Activated CD4-positive, alpha-beta memory T cell treated with anti-CD3 and anti-CD28 coated beads for 36 hours (primary cell): ENCODE measurements at regions of chrX and their contacts with region 1.

Region 1: GRCh38 chrX:47193475-47194193 is at the start of gene UBA1:
- DNase-seq: peak; percentile 94
- H3K4me3 Mint-ChIP-seq: peak within 1 kb of the TSS; percentile 92
- H3K27ac Mint-ChIP-seq: peak within 1 kb of the TSS; percentile 91
- H3K4me1 Mint-ChIP-seq: peaks cover 54% of the 10 kb centered on the region
- H3K27me3 Mint-ChIP-seq: no peaks in the 10 kb centered on the region
- total RNA-seq, gene UBA1: 266 to 278 TPM

Region 2: GRCh38 chrX:47144626-47145394 is 48.8 kb before region 1 on chrX and contains the starts of genes NDUFB11 and RBM10:
- CTCF ChIA-PET with region 1: interaction called, 7 read pairs
- POLR2A ChIA-PET with region 1: interaction called, 11 read pairs
- intact Hi-C with region 1: loop called (anchors 1 kb)
- DNase-seq: peak; percentile 95
- H3K4me3 Mint-ChIP-seq: peak within 1 kb of the TSS; percentile 99
- H3K27ac Mint-ChIP-seq: peak within 1 kb of the TSS; percentile 100
- H3K4me1 Mint-ChIP-seq: peaks cover 26% of the 10 kb centered on the region
- H3K27me3 Mint-ChIP-seq: no peaks in the 10 kb centered on the region
- total RNA-seq, gene NDUFB11: 86.4 to 89.1 TPM
- total RNA-seq, gene RBM10: 61.0 to 62.3 TPM

Region 3: GRCh38 chrX:47311932-47312774 is 118.5 kb after region 1 on chrX:
- CTCF ChIA-PET with region 1: interaction called, 15 read pairs
- POLR2A ChIA-PET with region 1: no interaction called
- intact Hi-C with region 1: loop called (anchors 1 kb)
- DNase-seq: peak; percentile 73
- H3K4me3 Mint-ChIP-seq: no peak overlapping the region
- H3K27ac Mint-ChIP-seq: no peak overlapping the region
- H3K4me1 Mint-ChIP-seq: no peaks in the 10 kb centered on the region
- H3K27me3 Mint-ChIP-seq: no peaks in the 10 kb centered on the region

Region 4: DNA sequence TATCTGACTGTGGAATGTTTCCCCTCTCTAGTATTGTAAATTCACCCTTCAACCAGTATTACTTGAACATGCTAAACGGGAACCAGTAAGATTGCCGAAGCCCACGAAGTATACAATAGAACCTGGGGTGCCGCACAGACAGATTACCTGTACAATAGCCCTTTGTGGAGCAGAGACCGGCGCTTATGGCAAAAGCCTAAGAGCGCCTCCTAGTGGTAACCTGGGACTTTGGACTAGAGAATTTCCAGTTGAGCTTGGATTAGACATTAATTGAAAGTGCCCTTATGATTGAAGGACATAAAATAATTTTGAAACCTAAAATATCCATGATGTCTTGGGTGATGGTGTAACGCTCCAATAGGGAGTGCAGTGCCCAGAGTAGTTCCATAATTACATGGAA is 190.9 kb after region 1 on chrX:
- CTCF ChIA-PET with region 1: interaction called, 18 read pairs
- POLR2A ChIA-PET with region 1: interaction called, 4 read pairs
- intact Hi-C with region 1: loop called (anchors 1 kb)
- DNase-seq: peak; percentile 73
- H3K4me3 Mint-ChIP-seq: no peak overlapping the region
- H3K27ac Mint-ChIP-seq: no peak overlapping the region
- H3K4me1 Mint-ChIP-seq: peaks cover 7% of the 10 kb centered on the region
- H3K27me3 Mint-ChIP-seq: no peaks in the 10 kb centered on the region

Region 5: GRCh38 chrX:47523297-47523696 is 329.7 kb after region 1 on chrX:
- CTCF ChIA-PET with region 1: interaction called, 8 read pairs
- POLR2A ChIA-PET with region 1: interaction called, 3 read pairs
- intact Hi-C with region 1: loop called (anchors 2 kb)
- DNase-seq: peak; percentile 86
- H3K4me3 Mint-ChIP-seq: peak overlapping the region; percentile 60
- H3K27ac Mint-ChIP-seq: no peak overlapping the region
- H3K4me1 Mint-ChIP-seq: no peaks in the 10 kb centered on the region
- H3K27me3 Mint-ChIP-seq: no peaks in the 10 kb centered on the region